WTC11 (cell line): ENCODE measurements at regions of chr6 and their contacts with region 1.

Region 1: DNA sequence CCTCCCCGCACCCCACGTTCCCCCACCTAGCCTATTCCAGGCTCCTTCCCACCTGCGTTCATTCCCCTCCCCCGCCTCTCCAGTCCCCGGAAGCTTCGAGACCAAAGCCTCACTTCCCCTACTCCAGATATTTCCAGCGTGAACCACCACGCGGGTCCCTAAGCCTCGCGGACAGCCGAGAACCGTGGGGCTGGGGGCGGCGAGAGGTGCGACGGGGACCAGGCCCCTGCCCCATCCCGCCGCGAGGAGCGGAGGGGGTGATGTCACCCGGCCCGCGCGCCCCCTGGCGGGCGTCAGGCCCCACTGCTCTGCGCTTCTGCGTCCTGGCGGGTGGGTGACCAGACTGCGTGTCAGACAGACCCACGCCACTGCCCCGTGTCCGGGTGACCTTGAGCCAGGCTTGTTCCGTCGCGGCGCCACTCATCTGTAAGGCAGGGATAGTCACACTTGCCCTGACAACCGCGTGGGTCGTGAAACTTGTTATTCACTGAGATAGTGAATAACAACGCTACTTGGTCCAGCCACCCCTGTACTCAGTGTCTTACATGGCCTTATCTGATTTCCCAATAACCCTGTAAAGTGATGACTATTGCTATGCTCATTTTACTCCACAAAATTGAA is 9.0 kb upstream of the HSP90AB1 start:
- DNase-seq: peak; percentile 77
- ATAC-seq: peak; percentile 56
- H3K4me3 Mint-ChIP-seq: peak overlapping the region; percentile 78
- H3K27ac Mint-ChIP-seq: peak overlapping the region; percentile 74; the same call in 1 of the 2 replicates
- H3K4me1 Mint-ChIP-seq: peaks cover 44% of the 10 kb centered on the region
- H3K27me3 Mint-ChIP-seq: peaks cover 30% of the 10 kb centered on the region
- CTCF ChIP-seq: peak; percentile 90

Region 2: GRCh38 chr6:44156494-44157151 is 81.3 kb before region 1 on chr6:
- CTCF ChIA-PET with region 1: interaction called, 12 read pairs
- POLR2A ChIA-PET with region 1: no interaction called
- DNase-seq: peak; percentile 36
- ATAC-seq: peak; percentile 48
- H3K4me3 Mint-ChIP-seq: no peak overlapping the region
- H3K27ac Mint-ChIP-seq: peak overlapping the region; percentile 77
- H3K4me1 Mint-ChIP-seq: peaks cover 26% of the 10 kb centered on the region
- H3K27me3 Mint-ChIP-seq: no peaks in the 10 kb centered on the region
- CTCF ChIP-seq: no peak

Region 3: DNA sequence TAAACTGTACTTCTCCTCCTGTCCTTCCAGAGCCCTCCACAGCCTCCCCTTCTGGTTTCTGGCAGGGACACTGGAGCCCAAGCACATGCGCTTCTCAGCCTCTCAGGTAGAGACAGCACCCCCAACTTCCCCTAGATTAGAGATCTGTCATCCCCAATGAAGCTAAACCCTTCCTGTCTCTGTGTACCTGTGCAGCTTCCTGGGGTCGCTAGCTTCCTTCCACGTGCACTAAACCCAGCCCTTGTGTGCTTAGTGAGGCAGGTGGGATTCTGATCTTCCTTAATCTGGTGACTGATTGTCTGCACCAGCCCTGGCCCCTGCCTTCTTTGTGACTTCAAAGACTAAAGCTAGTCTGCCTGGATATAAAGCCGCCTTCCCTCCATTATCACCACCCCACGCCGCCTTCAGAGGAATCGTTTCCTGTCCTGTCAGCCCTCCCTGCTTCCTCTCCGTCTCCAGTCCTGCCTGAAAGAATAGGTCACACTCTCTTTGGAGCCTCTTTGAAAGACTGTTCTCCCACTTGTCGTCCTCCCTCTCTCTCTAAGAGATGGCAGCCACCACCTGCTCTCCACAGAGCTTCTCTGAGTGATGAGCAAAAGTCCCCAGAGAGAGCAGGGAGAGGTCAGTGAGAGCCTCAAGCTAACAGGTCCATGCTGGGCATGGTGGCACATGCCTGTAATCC is 51.8 kb before region 1 on chr6:
- CTCF ChIA-PET with region 1: interaction called, 10 read pairs
- POLR2A ChIA-PET with region 1: no interaction called
- DNase-seq: no peak
- ATAC-seq: peak; percentile 63
- H3K4me3 Mint-ChIP-seq: no peak overlapping the region
- H3K27ac Mint-ChIP-seq: peak overlapping the region; percentile 22
- H3K4me1 Mint-ChIP-seq: peaks cover 33% of the 10 kb centered on the region
- H3K27me3 Mint-ChIP-seq: peaks cover 8% of the 10 kb centered on the region
- CTCF ChIP-seq: no peak

Region 4: DNA sequence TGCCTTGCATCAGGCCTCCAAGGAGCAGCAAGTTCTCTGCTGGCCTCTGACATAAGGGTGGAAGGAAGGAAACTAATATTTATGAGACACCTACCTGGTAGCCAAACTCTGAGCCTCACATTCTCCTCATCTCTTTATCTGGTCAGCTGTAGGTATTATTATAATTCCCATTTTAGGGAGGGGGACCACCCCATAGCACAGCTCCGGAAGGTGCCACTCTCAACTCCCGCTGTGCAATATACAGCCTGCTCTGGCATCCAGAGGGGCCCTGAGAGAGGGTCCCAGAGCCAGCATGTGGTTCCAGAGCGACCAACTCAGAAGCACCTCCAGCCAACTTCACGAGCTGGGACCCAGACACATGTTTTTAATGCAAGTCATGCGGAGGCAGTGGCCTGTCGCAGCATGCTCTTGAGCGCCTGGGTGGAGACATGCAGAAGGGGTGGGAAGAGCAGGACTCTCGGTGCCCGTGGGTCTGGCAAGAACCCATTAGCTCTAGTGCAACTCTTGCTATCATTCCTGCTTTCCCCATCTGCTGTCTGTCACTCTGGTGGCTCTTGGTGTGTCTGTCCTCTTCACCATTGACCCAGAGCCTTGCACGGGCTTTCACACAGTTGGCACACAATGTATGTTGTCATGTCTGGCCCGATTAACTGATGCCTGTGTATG is 36.2 kb before region 1 on chr6:
- CTCF ChIA-PET with region 1: interaction called, 28 read pairs
- POLR2A ChIA-PET with region 1: interaction called, 4 read pairs
- DNase-seq: no peak
- ATAC-seq: no peak
- H3K4me3 Mint-ChIP-seq: no peak overlapping the region
- H3K27ac Mint-ChIP-seq: peak overlapping the region; percentile 100
- H3K4me1 Mint-ChIP-seq: peaks cover 53% of the 10 kb centered on the region
- H3K27me3 Mint-ChIP-seq: no peaks in the 10 kb centered on the region; the same call in 1 of the 2 replicates
- CTCF ChIP-seq: no peak

Region 5: GRCh38 chr6:44257025-44257752 is 19.3 kb after region 1 on chr6 and contains the start of gene SLC35B2:
- CTCF ChIA-PET with region 1: interaction called, 76 read pairs
- POLR2A ChIA-PET with region 1: interaction called, 9 read pairs
- DNase-seq: peak; percentile 76
- ATAC-seq: peak; percentile 31
- H3K4me3 Mint-ChIP-seq: peak within 1 kb of the TSS; percentile 83
- H3K27ac Mint-ChIP-seq: peak within 1 kb of the TSS; percentile 87
- H3K4me1 Mint-ChIP-seq: peaks cover 27% of the 10 kb centered on the region
- H3K27me3 Mint-ChIP-seq: no peaks in the 10 kb centered on the region
- CTCF ChIP-seq: peak; percentile 75
- total RNA-seq, gene SLC35B2: 28.9 to 36.7 TPM (median 30.8 TPM) in 3 replicates

Region 6: DNA sequence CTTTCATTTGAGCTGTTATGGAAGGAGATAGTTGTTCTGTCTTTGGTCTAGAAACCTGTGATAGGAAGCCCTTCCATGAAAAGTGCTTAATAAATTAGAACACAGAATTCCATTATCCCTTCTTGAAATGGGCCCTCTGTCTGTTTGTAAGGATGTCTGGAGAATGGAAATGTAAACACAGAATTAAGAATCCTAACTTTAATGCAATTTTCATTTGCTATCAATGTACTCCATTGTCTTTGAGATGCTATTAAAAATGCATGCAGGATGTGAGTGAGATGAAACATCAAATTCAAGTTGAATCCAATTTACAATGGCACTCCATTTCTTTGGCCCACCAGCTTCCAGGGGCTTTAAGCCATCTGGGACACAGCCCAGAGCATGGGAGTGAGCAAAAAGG is 89.2 kb after region 1 on chr6:
- CTCF ChIA-PET with region 1: no interaction called
- POLR2A ChIA-PET with region 1: no interaction called
- DNase-seq: no peak
- ATAC-seq: no peak; the same call in 1 of the 2 replicates
- H3K4me3 Mint-ChIP-seq: no peak overlapping the region
- H3K27ac Mint-ChIP-seq: no peak overlapping the region
- H3K4me1 Mint-ChIP-seq: peaks cover 21% of the 10 kb centered on the region
- H3K27me3 Mint-ChIP-seq: peaks cover 8% of the 10 kb centered on the region
- CTCF ChIP-seq: no peak

Region 7: GRCh38 chr6:44464527-44465310 is 226.8 kb after region 1 on chr6:
- CTCF ChIA-PET with region 1: no interaction called
- POLR2A ChIA-PET with region 1: no interaction called
- DNase-seq: no peak
- ATAC-seq: peak; percentile 73
- H3K4me3 Mint-ChIP-seq: no peak overlapping the region
- H3K27ac Mint-ChIP-seq: no peak overlapping the region
- H3K4me1 Mint-ChIP-seq: peaks cover 5% of the 10 kb centered on the region
- H3K27me3 Mint-ChIP-seq: no peaks in the 10 kb centered on the region; the same call in 1 of the 2 replicates
- CTCF ChIP-seq: no peak

Region 8: GRCh38 chr6:44512868-44513741 is 275.2 kb after region 1 on chr6:
- CTCF ChIA-PET with region 1: no interaction called
- POLR2A ChIA-PET with region 1: no interaction called
- DNase-seq: no peak
- ATAC-seq: peak; percentile 55; the same call in 1 of the 2 replicates
- H3K4me3 Mint-ChIP-seq: no peak overlapping the region
- H3K27ac Mint-ChIP-seq: no peak overlapping the region
- H3K4me1 Mint-ChIP-seq: 0 out of 2 replicates have a peak, but pooled peaks cover 2% of the 10 kb centered on the region
- H3K27me3 Mint-ChIP-seq: no peaks in the 10 kb centered on the region; the same call in 1 of the 2 replicates
- CTCF ChIP-seq: no peak